ENCODE measurements at regions of chr1 and their contacts with region 1.

Region 1: DNA sequence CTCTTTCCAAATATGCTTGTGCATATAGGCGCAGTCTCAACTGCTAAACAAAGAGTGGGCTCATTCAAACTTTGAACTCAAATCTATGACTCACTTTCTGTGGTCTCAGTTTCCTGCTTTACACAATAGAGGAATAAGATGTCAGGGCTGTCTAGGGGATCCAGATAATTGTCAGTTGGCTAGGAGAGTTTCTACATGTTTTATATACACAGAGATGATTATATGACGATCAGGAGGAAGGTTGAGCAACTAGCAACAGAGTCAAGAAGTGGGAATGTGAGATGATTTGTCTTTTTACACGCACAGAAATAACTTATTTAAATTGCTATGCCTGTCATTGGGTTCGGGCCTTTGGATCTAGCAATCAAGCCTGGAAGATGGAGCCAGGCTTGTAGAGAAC is 299.4 kb upstream of the LYPLAL1 start:
- DNase-seq: peak; percentile 52
- H3K4me3 Mint-ChIP-seq: peak overlapping the region; percentile 47
- H3K27ac Mint-ChIP-seq: peak overlapping the region; percentile 68
- H3K4me1 Mint-ChIP-seq: peaks cover 59% of the 10 kb centered on the region
- H3K27me3 Mint-ChIP-seq: no peaks in the 10 kb centered on the region
- CTCF ChIP-seq: no peak

Region 2: DNA sequence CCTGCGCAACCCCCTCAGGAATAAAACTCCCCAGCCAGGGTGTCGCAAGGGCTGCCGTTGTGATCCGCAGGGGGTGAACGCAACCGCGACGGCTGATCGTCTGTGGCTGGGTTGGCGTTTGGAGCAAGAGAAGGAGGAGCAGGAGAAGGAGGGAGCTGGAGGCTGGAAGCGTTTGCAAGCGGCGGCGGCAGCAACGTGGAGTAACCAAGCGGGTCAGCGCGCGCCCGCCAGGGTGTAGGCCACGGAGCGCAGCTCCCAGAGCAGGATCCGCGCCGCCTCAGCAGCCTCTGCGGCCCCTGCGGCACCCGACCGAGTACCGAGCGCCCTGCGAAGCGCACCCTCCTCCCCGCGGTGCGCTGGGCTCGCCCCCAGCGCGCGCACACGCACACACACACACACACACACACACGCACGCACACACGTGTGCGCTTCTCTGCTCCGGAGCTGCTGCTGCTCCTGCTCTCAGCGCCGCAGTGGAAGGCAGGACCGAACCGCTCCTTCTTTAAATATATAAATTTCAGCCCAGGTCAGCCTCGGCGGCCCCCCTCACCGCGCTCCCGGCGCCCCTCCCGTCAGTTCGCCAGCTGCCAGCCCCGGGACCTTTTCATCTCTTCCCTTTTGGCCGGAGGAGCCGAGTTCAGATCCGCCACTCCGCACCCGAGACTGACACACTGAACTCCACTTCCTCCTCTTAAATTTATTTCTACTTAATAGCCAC is 528.5 kb before region 1 on chr1:
- CTCF ChIA-PET with region 1: interaction called, 3 read pairs
- intact Hi-C with region 1: loop called (anchors 5 kb)
- DNase-seq: peak; percentile 70
- H3K4me3 Mint-ChIP-seq: no peak overlapping the region
- H3K27ac Mint-ChIP-seq: no peak overlapping the region
- H3K4me1 Mint-ChIP-seq: peaks cover 19% of the 10 kb centered on the region
- H3K27me3 Mint-ChIP-seq: no peaks in the 10 kb centered on the region
- CTCF ChIP-seq: no peak

Region 3: DNA sequence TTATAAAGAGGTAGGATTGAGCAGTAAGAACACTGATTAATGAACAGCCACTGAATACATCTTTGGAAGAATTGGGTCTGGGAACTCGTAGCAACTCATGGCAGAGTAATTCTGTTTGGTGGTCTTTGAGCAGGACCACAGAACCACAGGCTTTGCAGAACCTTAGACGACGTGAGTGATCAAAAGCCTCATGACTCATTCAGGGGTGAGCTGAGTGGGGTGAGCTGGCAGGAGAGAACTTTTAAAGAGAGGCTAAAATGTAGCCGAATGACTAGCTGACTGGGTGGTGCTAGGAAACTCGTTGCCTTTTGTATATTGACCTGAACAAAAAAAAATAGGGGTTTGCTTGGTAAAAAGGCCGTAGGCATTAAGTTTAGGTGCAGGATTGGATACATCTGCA is 215.4 kb before region 1 on chr1:
- CTCF ChIA-PET with region 1: no interaction called
- intact Hi-C with region 1: loop called (anchors 5 kb)
- DNase-seq: peak; percentile 37
- H3K4me3 Mint-ChIP-seq: no peak overlapping the region
- H3K27ac Mint-ChIP-seq: peak overlapping the region; percentile 75
- H3K4me1 Mint-ChIP-seq: peaks cover 59% of the 10 kb centered on the region
- H3K27me3 Mint-ChIP-seq: no peaks in the 10 kb centered on the region
- CTCF ChIP-seq: no peak

Region 4: GRCh38 chr1:218735436-218736032 is 138.8 kb before region 1 on chr1:
- CTCF ChIA-PET with region 1: no interaction called
- intact Hi-C with region 1: no loop called
- DNase-seq: no peak
- H3K4me3 Mint-ChIP-seq: no peak overlapping the region
- H3K27ac Mint-ChIP-seq: no peak overlapping the region
- H3K4me1 Mint-ChIP-seq: no peaks in the 10 kb centered on the region
- H3K27me3 Mint-ChIP-seq: no peaks in the 10 kb centered on the region
- CTCF ChIP-seq: no peak

Region 5: DNA sequence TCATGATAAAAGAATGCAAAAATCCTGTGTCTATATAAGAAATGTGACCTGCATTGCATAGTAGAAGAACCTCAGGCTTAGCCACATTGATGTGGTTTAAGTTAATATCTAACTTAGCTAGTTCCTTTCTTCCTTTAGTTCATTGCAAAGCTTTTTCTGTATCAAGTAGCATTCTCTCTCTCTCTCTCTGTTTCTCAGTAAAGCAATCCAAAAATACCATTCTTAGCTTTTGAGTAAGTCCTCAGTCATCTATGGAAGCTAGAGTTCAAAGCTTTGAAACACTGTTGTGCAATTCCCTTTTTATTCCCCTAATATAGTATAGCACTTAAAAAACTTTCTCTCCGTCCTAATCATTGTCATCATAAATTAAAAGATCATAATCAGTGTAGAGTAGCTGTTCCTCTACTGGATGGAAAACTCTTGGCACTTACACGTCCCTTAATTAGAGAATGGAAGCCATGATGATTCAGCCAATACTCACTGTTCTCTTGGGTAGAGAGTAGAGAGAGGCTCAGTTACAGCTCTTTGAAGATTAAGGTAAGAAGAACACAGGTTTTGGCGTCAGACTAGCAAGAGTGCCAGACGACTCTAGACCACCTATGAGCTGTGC is 50.9 kb before region 1 on chr1:
- CTCF ChIA-PET with region 1: interaction called, 16 read pairs
- intact Hi-C with region 1: loop called (anchors 1 kb)
- DNase-seq: peak; percentile 19
- H3K4me3 Mint-ChIP-seq: no peak overlapping the region
- H3K27ac Mint-ChIP-seq: peak overlapping the region; percentile 77
- H3K4me1 Mint-ChIP-seq: peaks cover 57% of the 10 kb centered on the region
- H3K27me3 Mint-ChIP-seq: no peaks in the 10 kb centered on the region
- CTCF ChIP-seq: no peak

Region 6: DNA sequence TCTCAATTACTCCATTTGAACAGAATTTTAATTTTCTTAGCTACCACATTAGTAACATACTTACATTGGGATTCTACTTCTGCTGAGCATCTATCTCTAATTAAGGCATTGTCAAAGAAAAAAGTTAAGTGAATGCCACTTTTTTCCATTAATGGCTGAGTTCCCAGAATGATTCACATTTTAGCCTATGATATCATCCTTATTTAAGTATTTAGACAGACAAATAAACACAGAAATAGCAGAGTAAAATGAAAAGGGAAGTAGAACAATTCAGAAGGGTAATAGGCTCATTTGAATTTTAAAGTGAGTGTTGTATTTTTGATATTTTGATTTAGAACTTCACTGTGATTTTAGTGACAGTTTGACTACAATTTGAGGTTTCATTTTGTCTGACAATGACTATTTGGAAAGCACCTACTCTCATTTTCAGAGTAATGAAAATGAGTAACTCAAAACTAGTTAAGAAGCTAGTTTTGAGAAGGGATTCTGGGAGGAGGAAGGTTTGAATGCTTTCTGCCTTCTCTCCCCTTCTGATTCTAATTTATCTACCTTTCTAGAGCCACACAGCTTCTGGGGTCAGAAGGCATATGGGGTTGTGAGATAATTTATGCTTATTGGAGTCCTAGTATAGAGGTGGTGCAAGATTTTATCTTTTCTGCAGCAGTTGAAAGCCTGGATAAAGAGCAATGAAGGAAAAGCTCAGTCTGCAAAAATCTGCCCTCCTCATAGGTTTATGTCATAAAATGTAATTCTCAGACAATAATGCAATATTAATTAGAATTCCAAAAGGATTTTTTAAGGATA is 314.9 kb after region 1 on chr1:
- CTCF ChIA-PET with region 1: no interaction called
- intact Hi-C with region 1: loop called (anchors 10 kb)
- DNase-seq: no peak
- H3K4me3 Mint-ChIP-seq: peak overlapping the region; percentile 56
- H3K27ac Mint-ChIP-seq: peak overlapping the region; percentile 57
- H3K4me1 Mint-ChIP-seq: peaks cover 51% of the 10 kb centered on the region
- H3K27me3 Mint-ChIP-seq: no peaks in the 10 kb centered on the region
- CTCF ChIP-seq: no peak

Region 7: DNA sequence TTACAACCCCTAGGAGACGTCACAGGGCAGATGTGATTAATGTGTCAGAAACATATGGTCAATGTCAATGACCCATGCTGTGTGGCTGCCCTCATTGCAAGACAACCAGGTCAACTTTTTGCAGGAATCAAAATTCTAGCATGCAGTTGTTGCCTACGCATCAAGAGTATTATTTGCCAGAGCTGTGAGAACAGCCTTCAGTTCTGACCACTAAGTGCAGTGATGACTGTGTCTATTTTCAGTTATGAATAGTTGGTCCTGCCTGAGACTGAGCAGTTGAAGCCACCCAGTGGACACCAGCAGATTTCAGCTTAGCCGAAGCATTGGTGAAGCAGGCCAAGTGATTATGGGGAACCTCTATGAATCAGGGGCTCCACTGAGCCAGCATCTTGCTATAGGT is 346.6 kb after region 1 on chr1:
- CTCF ChIA-PET with region 1: no interaction called
- intact Hi-C with region 1: no loop called
- DNase-seq: no peak
- H3K4me3 Mint-ChIP-seq: no peak overlapping the region
- H3K27ac Mint-ChIP-seq: no peak overlapping the region
- H3K4me1 Mint-ChIP-seq: no peaks in the 10 kb centered on the region
- H3K27me3 Mint-ChIP-seq: no peaks in the 10 kb centered on the region
- CTCF ChIP-seq: no peak